ENCODE measurements at regions of chr16 and their contacts with region 1.

Region 1: DNA sequence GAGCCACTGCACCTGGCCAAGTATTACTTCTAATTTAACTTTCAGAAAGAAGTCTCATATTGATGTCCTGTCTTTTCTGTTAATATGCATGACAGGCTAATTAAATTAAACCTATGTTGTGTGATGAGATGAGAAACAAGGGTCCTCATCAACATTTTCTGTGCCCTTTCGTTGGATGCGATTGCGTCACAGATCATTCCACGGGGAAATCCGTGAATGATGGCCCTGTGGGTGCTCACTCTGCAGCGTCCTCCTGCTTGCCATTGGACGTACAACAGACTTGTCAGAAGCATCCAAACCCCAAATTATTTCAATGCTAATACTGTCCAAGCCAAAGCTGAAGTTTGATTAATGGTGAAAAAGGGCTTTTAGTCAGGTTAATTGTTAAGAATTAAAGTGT is 197.0 kb downstream of the MRTFB start:
- DNase-seq: no peak
- H3K4me3 ChIP-seq: no peak overlapping the region
- H3K27ac ChIP-seq: no peak overlapping the region
- H3K4me1 ChIP-seq: no peaks in the 10 kb centered on the region
- H3K27me3 ChIP-seq: no peaks in the 10 kb centered on the region
- CTCF ChIP-seq: no peak

Region 2: GRCh38 chr16:14225457-14225856 is 42.6 kb before region 1 on chr16:
- CTCF ChIA-PET with region 1: no interaction called
- dilution Hi-C with region 1: loop called (anchors 5 kb)
- in situ Hi-C with region 1: no loop called
- intact Hi-C with region 1: no loop called
- DNase-seq: no peak
- H3K4me3 ChIP-seq: no peak overlapping the region
- H3K27ac ChIP-seq: no peak overlapping the region
- H3K4me1 ChIP-seq: no peaks in the 10 kb centered on the region
- H3K27me3 ChIP-seq: no peaks in the 10 kb centered on the region
- CTCF ChIP-seq: no peak

Measured in mammary epithelial cell (primary cell).